ENCODE measurements at regions of chr22 and their contacts with region 1.

Region 1: GRCh38 chr22:40679964-40680818 is 907 bp downstream of the MCHR1 start:
- DNase-seq: peak in 1 of 2 experiments; percentile 15
- ATAC-seq: 0 out of 6 replicates have a peak, but pooled peaks of 1 of the 2 experiments have one; percentile 20
- H3K4me3 ChIP-seq: no peak overlapping the region
- H3K27ac ChIP-seq: no peak overlapping the region
- H3K4me1 ChIP-seq: peaks cover 8% of the 10 kb centered on the region
- CTCF ChIP-seq: no peak
- EP300 ChIP-seq: no peak
- POLR2A ChIP-seq: no peak
- RAD21 ChIP-seq: peak in 1 of 2 experiments; percentile 20; a peak in 1 of 5 replicates

Region 2: DNA sequence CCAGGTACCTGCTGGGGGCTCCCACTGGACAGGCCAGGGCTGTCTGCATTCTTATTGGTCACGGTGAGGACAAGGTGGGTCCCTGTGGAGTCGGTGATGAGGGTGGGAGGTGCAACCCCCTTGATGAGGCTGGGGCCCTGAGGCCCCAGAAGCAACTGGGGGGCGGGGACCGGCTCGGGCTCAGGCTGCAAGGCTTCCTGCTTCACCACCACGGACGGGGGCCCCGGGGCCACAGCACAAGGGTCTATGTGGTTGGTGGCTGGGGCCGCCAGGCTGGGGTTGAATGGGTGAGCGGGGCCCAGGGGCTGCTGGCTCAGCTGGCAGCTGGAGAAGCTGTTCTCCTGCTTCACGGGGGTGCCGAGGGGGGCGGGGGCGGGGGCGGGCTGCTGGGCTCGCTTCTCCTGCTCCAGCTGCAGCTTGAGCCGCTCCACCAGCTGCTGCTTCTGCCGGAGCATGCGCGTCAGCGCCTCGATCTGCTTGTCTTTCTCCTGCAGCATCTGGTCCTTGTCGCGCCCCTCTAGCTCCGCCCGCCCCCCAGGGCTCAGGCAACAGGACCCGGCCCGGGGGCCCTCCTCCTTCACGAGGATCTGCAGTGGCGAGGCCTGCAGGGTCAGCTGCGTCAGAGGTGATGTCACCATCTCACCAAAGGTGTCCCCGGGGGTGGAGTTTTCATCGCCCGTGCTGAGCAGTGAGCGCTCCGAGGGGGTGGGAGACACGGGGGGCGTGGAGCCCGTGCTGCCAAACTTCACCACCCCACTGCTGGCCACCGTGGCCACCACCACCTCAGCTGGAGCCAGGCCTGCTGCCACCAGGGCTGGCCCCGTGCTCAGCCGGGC is 261.6 kb before region 1 on chr22:
- CTCF ChIA-PET with region 1: no interaction called
- POLR2A ChIA-PET with region 1: no interaction called
- DNase-seq: no peak
- ATAC-seq: no peak
- H3K4me3 ChIP-seq: no peak overlapping the region
- H3K27ac ChIP-seq: no peak overlapping the region
- H3K4me1 ChIP-seq: no peaks in the 10 kb centered on the region
- CTCF ChIP-seq: no peak
- EP300 ChIP-seq: no peak
- POLR2A ChIP-seq: no peak
- RAD21 ChIP-seq: no peak

Region 3: GRCh38 chr22:40651563-40652501 is 28.4 kb before region 1 on chr22:
- CTCF ChIA-PET with region 1: interaction called, 11 read pairs
- POLR2A ChIA-PET with region 1: interaction called, 3 read pairs
- DNase-seq: peak; percentile 91 to 95
- ATAC-seq: peak; percentile 97 to 98
- H3K4me3 ChIP-seq: peak overlapping the region; percentile 75
- H3K27ac ChIP-seq: peak overlapping the region; percentile 96 to 98
- H3K4me1 ChIP-seq: peaks cover 31% of the 10 kb centered on the region
- CTCF ChIP-seq: no peak
- EP300 ChIP-seq: no peak
- POLR2A ChIP-seq: peak; percentile 22
- RAD21 ChIP-seq: no peak

Region 4: GRCh38 chr22:40668611-40669411 is 11.4 kb before region 1 on chr22:
- CTCF ChIA-PET with region 1: interaction called, 24 read pairs
- POLR2A ChIA-PET with region 1: no interaction called
- DNase-seq: peak; percentile 51 to 70
- ATAC-seq: peak; percentile 72 to 82
- H3K4me3 ChIP-seq: no peak overlapping the region
- H3K27ac ChIP-seq: peak overlapping the region in 1 of 2 experiments; percentile 32; a peak in 2 of 6 replicates
- H3K4me1 ChIP-seq: no peaks in the 10 kb centered on the region
- CTCF ChIP-seq: no peak
- EP300 ChIP-seq: no peak
- POLR2A ChIP-seq: no peak
- RAD21 ChIP-seq: no peak

Region 5: DNA sequence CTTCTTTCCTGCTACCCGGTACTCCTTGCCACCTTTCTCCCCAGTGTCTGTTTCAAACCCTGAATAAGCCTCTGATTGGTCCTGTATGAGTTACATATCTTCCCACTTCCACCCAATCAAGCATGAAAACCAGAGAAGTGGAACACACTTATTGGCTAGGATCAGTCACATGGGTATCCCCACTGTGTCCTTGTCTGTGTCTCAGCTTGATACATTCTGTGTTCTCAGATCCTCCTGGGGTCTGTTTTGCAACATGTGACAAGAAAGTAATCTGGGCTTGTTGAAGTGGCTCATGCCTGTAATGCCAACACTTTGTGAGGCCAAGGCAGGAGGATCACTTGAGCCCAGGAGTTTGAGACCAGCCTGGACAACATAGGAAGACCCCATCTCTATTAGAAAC is 23.0 kb after region 1 on chr22:
- CTCF ChIA-PET with region 1: interaction called, 15 read pairs
- POLR2A ChIA-PET with region 1: no interaction called
- DNase-seq: no peak
- ATAC-seq: peak in 1 of 2 experiments; percentile 40; a peak in 2 of 6 replicates
- H3K4me3 ChIP-seq: no peak overlapping the region
- H3K27ac ChIP-seq: no peak overlapping the region
- H3K4me1 ChIP-seq: no peaks in the 10 kb centered on the region
- CTCF ChIP-seq: no peak
- EP300 ChIP-seq: no peak
- POLR2A ChIP-seq: no peak
- RAD21 ChIP-seq: no peak

Region 6: DNA sequence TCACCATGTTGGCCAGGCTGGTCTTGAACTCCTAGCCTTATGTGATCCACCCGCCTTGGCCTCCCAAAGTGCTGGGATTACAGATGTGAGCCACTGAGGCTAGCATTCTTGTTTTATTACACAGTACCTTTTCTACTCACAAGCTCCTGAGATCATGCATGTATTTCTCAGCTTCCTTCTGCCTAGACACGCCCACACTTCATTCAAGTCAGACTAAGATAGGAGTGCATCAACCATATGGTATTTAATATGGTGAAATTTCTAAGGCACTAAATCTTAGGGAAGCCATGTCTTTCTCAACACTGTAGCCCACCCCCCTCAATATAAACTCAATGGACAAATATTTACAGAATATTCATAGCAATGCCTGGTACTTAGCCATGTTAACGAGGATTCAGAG is 76.9 kb after region 1 on chr22:
- CTCF ChIA-PET with region 1: interaction called, 127 read pairs
- POLR2A ChIA-PET with region 1: interaction called, 4 read pairs
- DNase-seq: no peak
- ATAC-seq: no peak
- H3K4me3 ChIP-seq: no peak overlapping the region
- H3K27ac ChIP-seq: no peak overlapping the region
- H3K4me1 ChIP-seq: no peaks in the 10 kb centered on the region
- CTCF ChIP-seq: no peak
- EP300 ChIP-seq: no peak
- POLR2A ChIP-seq: no peak
- RAD21 ChIP-seq: no peak

Measured in A549 (cell line).